ENCODE measurements at regions of chr20 and their contacts with region 1.

Region 1: GRCh38 chr20:45812157-45813020 is at the start of gene UBE2C:
- DNase-seq: peak; percentile 98
- H3K4me3 Mint-ChIP-seq: peak within 1 kb of the TSS; percentile 91
- H3K27ac Mint-ChIP-seq: peak within 1 kb of the TSS; percentile 68
- H3K4me1 Mint-ChIP-seq: peaks cover 13% of the 10 kb centered on the region
- H3K27me3 Mint-ChIP-seq: no peaks in the 10 kb centered on the region
- total RNA-seq, gene UBE2C: 192 to 196 TPM

Region 2: GRCh38 chr20:45629496-45630100 is 182.8 kb before region 1 on chr20 and contains the start of gene WFDC10A:
- CTCF ChIA-PET with region 1: no interaction called
- POLR2A ChIA-PET with region 1: no interaction called
- intact Hi-C with region 1: no loop called
- DNase-seq: peak; percentile 38
- H3K4me3 Mint-ChIP-seq: no peak within 1 kb of the TSS
- H3K27ac Mint-ChIP-seq: no peak within 1 kb of the TSS
- H3K4me1 Mint-ChIP-seq: peaks cover 2% of the 10 kb centered on the region
- H3K27me3 Mint-ChIP-seq: peaks cover 24% of the 10 kb centered on the region
- total RNA-seq, gene WFDC10A: not detected

Region 3: GRCh38 chr20:45792332-45792686 is 20.1 kb before region 1 on chr20:
- CTCF ChIA-PET with region 1: no interaction called
- POLR2A ChIA-PET with region 1: interaction called, 3 read pairs
- intact Hi-C with region 1: loop called (anchors 2 kb)
- DNase-seq: peak; percentile 20
- H3K4me3 Mint-ChIP-seq: peak overlapping the region; percentile 86
- H3K27ac Mint-ChIP-seq: peak overlapping the region; percentile 81
- H3K4me1 Mint-ChIP-seq: peaks cover 15% of the 10 kb centered on the region
- H3K27me3 Mint-ChIP-seq: no peaks in the 10 kb centered on the region

Region 4: GRCh38 chr20:45798935-45799642 is 13.3 kb before region 1 on chr20:
- CTCF ChIA-PET with region 1: interaction called, 15 read pairs
- POLR2A ChIA-PET with region 1: interaction called, 3 read pairs
- intact Hi-C with region 1: no loop called
- DNase-seq: peak; percentile 74
- H3K4me3 Mint-ChIP-seq: no peak overlapping the region
- H3K27ac Mint-ChIP-seq: peak overlapping the region; percentile 4
- H3K4me1 Mint-ChIP-seq: peaks cover 16% of the 10 kb centered on the region
- H3K27me3 Mint-ChIP-seq: no peaks in the 10 kb centered on the region

Region 5: GRCh38 chr20:45857114-45857881 is 44.9 kb after region 1 on chr20 and contains the starts of genes ACOT8 and ZSWIM3:
- CTCF ChIA-PET with region 1: interaction called, 4 read pairs
- POLR2A ChIA-PET with region 1: interaction called, 6 read pairs
- intact Hi-C with region 1: loop called (anchors 1 kb)
- DNase-seq: peak; percentile 96
- H3K4me3 Mint-ChIP-seq: peak within 1 kb of the TSS; percentile 97
- H3K27ac Mint-ChIP-seq: peak within 1 kb of the TSS; percentile 97
- H3K4me1 Mint-ChIP-seq: peaks cover 35% of the 10 kb centered on the region
- H3K27me3 Mint-ChIP-seq: no peaks in the 10 kb centered on the region
- total RNA-seq, gene ACOT8: 25.5 to 29.0 TPM
- total RNA-seq, gene ZSWIM3: 4.7 TPM